ENCODE measurements at regions of chr1 and their contacts with region 1.

Region 1: DNA sequence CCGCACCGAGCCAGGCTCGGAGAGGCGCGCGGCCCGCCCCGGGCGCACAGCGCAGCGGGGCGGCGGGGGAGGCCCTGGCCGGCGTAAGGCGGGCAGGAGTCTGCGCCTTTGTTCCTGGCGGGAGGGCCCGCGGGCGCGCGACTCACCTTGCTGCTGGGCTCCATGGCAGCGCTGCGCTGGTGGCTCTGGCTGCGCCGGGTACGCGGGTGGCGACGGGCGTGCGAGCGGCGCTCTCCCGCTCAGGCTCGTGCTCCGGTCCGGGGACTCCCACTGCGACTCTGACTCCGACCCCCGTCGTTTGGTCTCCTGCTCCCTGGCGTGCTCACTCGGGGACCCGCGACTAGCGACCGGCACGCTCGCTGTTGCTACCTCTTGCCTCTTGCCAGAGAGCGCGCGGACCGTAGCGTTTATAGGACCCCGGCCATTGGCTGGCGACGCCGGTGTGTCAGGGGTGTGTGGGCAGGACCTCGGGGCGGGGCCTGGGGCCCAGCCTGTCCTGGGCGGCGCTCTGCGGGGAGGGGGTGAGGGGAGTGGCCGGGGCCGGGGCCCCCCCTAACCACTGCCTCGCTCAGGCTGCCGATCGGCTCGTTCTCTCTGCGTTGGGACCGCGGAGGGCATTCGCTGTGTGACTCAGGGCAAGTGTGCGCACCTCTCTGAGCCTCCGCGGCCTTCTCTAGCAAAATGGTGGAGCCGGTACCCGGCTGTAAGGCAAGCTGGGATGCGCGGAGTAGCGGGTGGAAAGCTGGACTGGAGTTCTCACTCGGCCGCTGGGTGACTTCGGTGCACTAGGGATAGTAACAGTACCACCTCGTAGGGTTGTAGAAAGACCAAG is at the start of gene SLC2A1:
- DNase-seq: peak; percentile 98
- H3K4me3 Mint-ChIP-seq: peak within 1 kb of the TSS; percentile 94
- H3K27ac Mint-ChIP-seq: peak within 1 kb of the TSS; percentile 98
- H3K4me1 Mint-ChIP-seq: peaks cover 49% of the 10 kb centered on the region
- H3K27me3 Mint-ChIP-seq: peaks cover 2% of the 10 kb centered on the region
- total RNA-seq, gene SLC2A1: 67.6 to 73.6 TPM

Region 2: GRCh38 chr1:42681741-42682483 is 276.8 kb before region 1 on chr1 and contains the start of gene YBX1:
- CTCF ChIA-PET with region 1: no interaction called
- POLR2A ChIA-PET with region 1: no interaction called
- intact Hi-C with region 1: loop called (anchors 2 kb)
- DNase-seq: peak; percentile 97
- H3K4me3 Mint-ChIP-seq: peak within 1 kb of the TSS; percentile 93
- H3K27ac Mint-ChIP-seq: peak within 1 kb of the TSS; percentile 97
- H3K4me1 Mint-ChIP-seq: peaks cover 45% of the 10 kb centered on the region
- H3K27me3 Mint-ChIP-seq: no peaks in the 10 kb centered on the region
- total RNA-seq, gene YBX1: 1,101 to 1,134 TPM

Region 3: GRCh38 chr1:42846257-42847110 is 112.2 kb before region 1 on chr1 and contains the start of gene ZNF691:
- CTCF ChIA-PET with region 1: no interaction called
- POLR2A ChIA-PET with region 1: no interaction called
- intact Hi-C with region 1: loop called (anchors 1 kb)
- DNase-seq: peak; percentile 94
- H3K4me3 Mint-ChIP-seq: peak within 1 kb of the TSS; percentile 89
- H3K27ac Mint-ChIP-seq: peak within 1 kb of the TSS; percentile 72
- H3K4me1 Mint-ChIP-seq: peaks cover 44% of the 10 kb centered on the region
- H3K27me3 Mint-ChIP-seq: no peaks in the 10 kb centered on the region
- total RNA-seq, gene ZNF691: 8.6 to 9.5 TPM

Region 4: GRCh38 chr1:42886800-42887199 is 71.9 kb before region 1 on chr1:
- CTCF ChIA-PET with region 1: no interaction called
- POLR2A ChIA-PET with region 1: no interaction called
- intact Hi-C with region 1: no loop called
- DNase-seq: no peak
- H3K4me3 Mint-ChIP-seq: no peak overlapping the region
- H3K27ac Mint-ChIP-seq: no peak overlapping the region
- H3K4me1 Mint-ChIP-seq: no peaks in the 10 kb centered on the region
- H3K27me3 Mint-ChIP-seq: peaks cover 3% of the 10 kb centered on the region

Region 5: GRCh38 chr1:42931108-42931539 is 27.6 kb before region 1 on chr1:
- CTCF ChIA-PET with region 1: interaction called, 3 read pairs
- POLR2A ChIA-PET with region 1: interaction called, 12 read pairs
- intact Hi-C with region 1: loop called (anchors 1 kb)
- DNase-seq: peak; percentile 70
- H3K4me3 Mint-ChIP-seq: peak overlapping the region; percentile 35
- H3K27ac Mint-ChIP-seq: peak overlapping the region; percentile 98
- H3K4me1 Mint-ChIP-seq: peaks cover 61% of the 10 kb centered on the region
- H3K27me3 Mint-ChIP-seq: no peaks in the 10 kb centered on the region

Region 6: DNA sequence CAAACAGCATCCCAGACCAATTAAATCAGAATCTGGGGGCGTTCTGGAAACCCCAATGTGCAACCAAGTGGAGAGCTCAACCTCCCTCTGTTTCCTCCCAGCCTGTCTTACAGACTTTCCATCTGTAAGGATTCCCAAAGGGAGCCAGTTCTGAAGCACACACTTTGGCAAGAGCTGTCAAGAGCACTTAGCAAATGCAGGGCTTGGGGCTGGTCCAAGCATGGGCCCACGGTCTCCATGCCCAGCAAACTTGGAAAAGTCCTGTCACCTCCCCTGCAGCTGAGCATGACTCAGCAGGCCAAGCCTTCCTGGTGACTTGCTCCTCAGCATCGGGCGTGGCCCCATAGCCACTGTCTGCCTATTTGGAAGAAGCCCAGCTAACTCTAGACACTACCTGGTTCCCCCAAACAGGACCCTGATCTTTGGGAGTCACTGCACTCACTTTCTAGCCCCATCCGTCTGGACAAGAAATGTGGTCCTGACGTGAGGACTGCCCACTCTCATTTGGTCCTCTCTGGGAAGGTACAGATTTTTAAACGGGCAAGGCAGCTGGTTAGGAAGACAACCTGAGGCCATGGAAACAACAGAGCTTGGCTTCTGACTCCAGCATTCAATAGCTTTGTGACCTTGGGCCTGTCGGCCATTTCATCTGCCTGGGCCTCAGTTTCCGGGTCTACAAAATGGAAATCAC is 16.9 kb before region 1 on chr1:
- CTCF ChIA-PET with region 1: interaction called, 5 read pairs
- POLR2A ChIA-PET with region 1: interaction called, 14 read pairs
- intact Hi-C with region 1: loop called (anchors 1 kb)
- DNase-seq: peak; percentile 64
- H3K4me3 Mint-ChIP-seq: no peak overlapping the region
- H3K27ac Mint-ChIP-seq: peak overlapping the region; percentile 81
- H3K4me1 Mint-ChIP-seq: peaks cover 95% of the 10 kb centered on the region
- H3K27me3 Mint-ChIP-seq: no peaks in the 10 kb centered on the region

Region 7: DNA sequence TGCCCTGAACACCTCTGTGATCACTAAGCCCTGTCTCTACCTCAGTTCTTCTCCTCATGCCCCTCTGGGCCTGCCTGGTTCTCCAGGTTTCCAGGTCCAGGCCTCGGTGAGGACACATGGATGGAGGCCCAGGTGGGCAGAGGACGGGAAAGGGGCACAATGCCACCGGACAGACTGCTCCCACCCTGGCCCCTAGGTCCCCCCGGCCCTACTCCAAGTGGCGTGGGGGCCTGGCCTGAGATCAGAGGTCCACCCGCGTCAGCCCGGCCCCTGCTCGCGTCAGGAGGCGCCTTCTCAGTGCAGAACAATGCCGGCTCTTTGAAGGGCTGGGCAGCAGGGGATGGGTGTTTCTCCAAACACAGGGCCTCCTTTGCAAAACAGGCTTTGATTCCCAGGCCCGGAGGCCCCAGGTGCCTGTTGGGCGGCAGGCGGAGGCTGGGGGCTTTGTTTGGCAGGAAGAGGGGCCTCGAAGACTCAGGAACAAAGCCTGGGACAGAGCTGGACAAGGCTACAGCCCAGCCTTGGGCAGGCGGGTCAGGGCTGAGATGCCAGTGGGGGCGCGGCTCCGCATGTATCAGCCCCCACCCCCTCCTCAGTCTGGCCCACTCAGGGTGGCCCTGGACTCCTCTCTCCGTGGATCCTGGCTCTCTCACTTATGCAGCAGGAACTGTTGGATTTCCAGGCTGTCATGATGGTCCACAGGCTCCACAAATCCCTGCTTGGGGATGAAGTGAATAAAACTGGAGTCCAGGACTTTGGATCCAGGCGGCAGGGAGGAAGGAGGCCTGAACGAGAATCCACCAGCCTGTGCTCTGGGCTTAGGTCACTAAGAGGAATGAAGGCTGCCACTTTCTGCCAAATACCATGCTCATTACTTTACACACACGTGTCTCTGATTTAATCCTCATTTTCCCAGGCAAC is 77.4 kb after region 1 on chr1:
- CTCF ChIA-PET with region 1: no interaction called
- POLR2A ChIA-PET with region 1: no interaction called
- intact Hi-C with region 1: no loop called
- DNase-seq: no peak
- H3K4me3 Mint-ChIP-seq: no peak overlapping the region
- H3K27ac Mint-ChIP-seq: no peak overlapping the region
- H3K4me1 Mint-ChIP-seq: peaks cover 17% of the 10 kb centered on the region
- H3K27me3 Mint-ChIP-seq: no peaks in the 10 kb centered on the region

Region 8: DNA sequence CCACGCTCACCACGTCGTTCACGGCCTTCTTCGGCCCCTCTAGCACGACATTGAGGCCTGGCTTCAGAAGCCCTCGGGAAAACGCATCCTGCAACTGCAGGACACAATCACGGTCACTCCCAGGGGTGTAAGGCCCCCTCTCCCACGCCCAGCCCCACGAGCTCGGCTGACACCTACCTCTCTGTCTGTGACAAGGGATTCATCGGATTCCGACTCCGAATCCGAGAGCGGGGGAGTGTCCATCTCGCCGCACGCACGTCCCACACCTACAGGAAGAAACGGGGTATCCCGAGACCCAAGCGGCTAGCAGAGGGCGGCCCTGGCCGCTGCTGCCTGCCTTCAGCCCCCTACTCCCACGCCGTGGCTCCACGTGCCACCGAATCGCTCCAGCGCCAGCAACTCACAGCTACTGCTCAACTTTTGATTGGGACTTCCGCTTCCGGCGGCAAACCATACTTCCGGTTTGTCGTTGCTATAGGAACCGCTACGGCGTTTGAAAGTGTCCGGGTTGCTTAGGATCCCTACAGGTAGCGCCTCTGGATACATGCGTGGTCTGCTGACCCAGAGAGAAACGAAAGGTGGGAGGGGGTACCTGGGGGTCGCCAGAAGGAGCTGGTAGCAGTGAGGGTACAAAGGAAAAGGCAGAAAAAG is 213.3 kb after region 1 on chr1 and contains the starts of genes CFAP57 and EBNA1BP2:
- CTCF ChIA-PET with region 1: no interaction called
- POLR2A ChIA-PET with region 1: no interaction called
- intact Hi-C with region 1: loop called (anchors 5 kb)
- DNase-seq: peak; percentile 96
- H3K4me3 Mint-ChIP-seq: peak within 1 kb of the TSS; percentile 98
- H3K27ac Mint-ChIP-seq: peak within 1 kb of the TSS; percentile 76
- H3K4me1 Mint-ChIP-seq: peaks cover 27% of the 10 kb centered on the region
- H3K27me3 Mint-ChIP-seq: peaks cover 16% of the 10 kb centered on the region
- total RNA-seq, gene CFAP57: 0.43 TPM in 1 of 2 experiments, not detected in the other
- total RNA-seq, gene EBNA1BP2: 97.5 to 104 TPM

Region 9: GRCh38 chr1:44631647-44632539 is 1673.2 kb after region 1 on chr1:
- CTCF ChIA-PET with region 1: no interaction called
- POLR2A ChIA-PET with region 1: no interaction called
- intact Hi-C with region 1: loop called (anchors 10 kb)
- DNase-seq: peak; percentile 94
- H3K4me3 Mint-ChIP-seq: peak overlapping the region; percentile 91
- H3K27ac Mint-ChIP-seq: peak overlapping the region; percentile 94
- H3K4me1 Mint-ChIP-seq: peaks cover 36% of the 10 kb centered on the region
- H3K27me3 Mint-ChIP-seq: no peaks in the 10 kb centered on the region

Measured in activated CD4-positive, alpha-beta memory T cell treated with anti-CD3 and anti-CD28 coated beads for 36 hours (primary cell).